Calu3 (cell line): ENCODE measurements at regions of chr9 and their contacts with region 1.

Region 1: DNA sequence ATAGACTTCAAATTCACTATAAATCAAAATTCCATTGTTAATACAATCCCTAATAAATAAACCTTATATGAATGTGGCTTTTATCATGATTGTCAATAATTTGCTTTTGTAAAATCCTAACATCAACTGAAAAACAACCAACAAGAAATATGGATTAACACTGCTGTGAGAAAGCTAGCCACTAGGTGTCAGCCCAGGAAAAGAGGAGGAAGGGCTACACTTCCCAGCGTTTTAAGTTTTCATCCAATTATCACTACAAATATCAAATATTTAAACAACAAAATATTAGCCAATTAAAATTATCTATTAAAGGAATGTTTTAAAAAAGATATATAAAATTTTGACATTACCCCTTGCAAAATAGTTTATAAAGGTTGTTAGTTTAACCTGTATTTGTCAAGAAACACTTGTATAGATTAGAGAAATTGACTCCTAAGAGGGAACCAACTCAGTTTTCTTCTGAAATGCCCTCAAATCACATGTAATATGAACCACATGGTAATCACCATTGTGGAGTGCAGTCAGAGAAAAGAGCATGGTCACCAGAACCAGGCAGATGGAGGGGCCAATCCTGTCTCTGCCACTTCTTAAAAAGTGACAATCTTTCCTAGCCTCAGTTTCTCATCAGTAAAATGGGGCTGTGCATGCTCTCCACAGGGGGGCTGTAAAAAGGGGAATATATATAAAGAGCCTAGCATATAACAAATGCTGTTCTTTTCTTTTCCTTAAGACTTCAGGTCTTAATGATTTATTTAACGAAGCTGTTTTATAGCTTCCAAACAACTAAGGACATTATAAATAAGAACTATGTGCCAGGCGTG is 188.2 kb downstream of the CRB2 start:
- DNase-seq: peak; percentile 25
- H3K4me3 Mint-ChIP-seq: no peak overlapping the region
- H3K27ac Mint-ChIP-seq: no peak overlapping the region
- H3K4me1 Mint-ChIP-seq: no peaks in the 10 kb centered on the region
- H3K27me3 Mint-ChIP-seq: no peaks in the 10 kb centered on the region
- CTCF ChIP-seq: no peak

Region 2: GRCh38 chr9:123863164-123863855 is 319.1 kb after region 1 on chr9:
- CTCF ChIA-PET with region 1: no interaction called
- intact Hi-C with region 1: loop called (anchors 5 kb)
- DNase-seq: no peak
- H3K4me3 Mint-ChIP-seq: no peak overlapping the region
- H3K27ac Mint-ChIP-seq: no peak overlapping the region
- H3K4me1 Mint-ChIP-seq: no peaks in the 10 kb centered on the region
- H3K27me3 Mint-ChIP-seq: no peaks in the 10 kb centered on the region
- CTCF ChIP-seq: no peak

Region 3: GRCh38 chr9:124040935-124041816 is 497.0 kb after region 1 on chr9:
- CTCF ChIA-PET with region 1: no interaction called
- intact Hi-C with region 1: loop called (anchors 10 kb)
- DNase-seq: peak; percentile 49
- H3K4me3 Mint-ChIP-seq: peak overlapping the region; percentile 39
- H3K27ac Mint-ChIP-seq: no peak overlapping the region
- H3K4me1 Mint-ChIP-seq: peaks cover 8% of the 10 kb centered on the region
- H3K27me3 Mint-ChIP-seq: peaks cover 89% of the 10 kb centered on the region
- CTCF ChIP-seq: peak; percentile 89